ENCODE measurements at regions of chr17 and their contacts with region 1.

Region 1: DNA sequence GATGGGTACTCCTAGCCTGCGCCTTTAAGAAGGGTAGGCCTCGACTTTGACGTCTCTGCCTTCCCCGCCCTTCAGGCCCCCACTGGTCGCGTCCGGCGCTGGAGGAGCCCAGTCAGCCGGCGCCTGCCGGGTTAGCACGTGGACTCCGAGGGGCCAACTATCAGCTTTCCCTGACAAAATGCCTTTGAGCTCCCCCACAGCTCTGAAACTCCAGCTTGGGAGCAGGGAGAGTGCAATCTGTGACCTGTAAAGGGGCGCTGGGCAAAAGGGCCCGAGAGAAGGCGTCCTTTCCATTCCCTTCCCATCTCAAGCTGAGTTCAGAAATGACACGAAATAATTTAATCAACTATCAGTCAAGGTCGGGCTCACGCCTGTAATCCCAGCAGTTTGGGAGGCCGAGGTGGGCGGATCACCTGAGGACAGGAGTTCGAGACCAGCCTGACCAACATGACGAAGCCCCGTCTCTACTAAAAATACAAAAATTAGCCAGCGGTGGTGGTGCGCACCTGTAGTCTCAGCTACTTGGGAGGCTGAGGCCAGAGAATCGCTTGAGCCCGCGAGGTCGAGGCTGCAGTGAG is 2.3 kb upstream of the SLC25A39 start:
- DNase-seq: peak; percentile 84 to 96 (median 93)
- ATAC-seq: peak; percentile 75 to 82 (median 76)
- H3K4me3 ChIP-seq: peak overlapping the region; percentile 41 to 87
- H3K4me3 Mint-ChIP-seq: peak overlapping the region; percentile 64 to 94 (median 65)
- H3K27ac ChIP-seq: peak overlapping the region; percentile 28
- H3K27ac Mint-ChIP-seq: peak overlapping the region; percentile 85 to 88
- H3K4me1 ChIP-seq: peaks cover 4 to 49% of the 10 kb centered on the region in 2 experiments
- H3K4me1 Mint-ChIP-seq: peaks cover 11 to 40% (median 36%) of the 10 kb centered on the region in 3 donors
- H3K27me3 ChIP-seq: no peaks in the 10 kb centered on the region
- H3K27me3 Mint-ChIP-seq: no peaks in the 10 kb centered on the region

Region 2: DNA sequence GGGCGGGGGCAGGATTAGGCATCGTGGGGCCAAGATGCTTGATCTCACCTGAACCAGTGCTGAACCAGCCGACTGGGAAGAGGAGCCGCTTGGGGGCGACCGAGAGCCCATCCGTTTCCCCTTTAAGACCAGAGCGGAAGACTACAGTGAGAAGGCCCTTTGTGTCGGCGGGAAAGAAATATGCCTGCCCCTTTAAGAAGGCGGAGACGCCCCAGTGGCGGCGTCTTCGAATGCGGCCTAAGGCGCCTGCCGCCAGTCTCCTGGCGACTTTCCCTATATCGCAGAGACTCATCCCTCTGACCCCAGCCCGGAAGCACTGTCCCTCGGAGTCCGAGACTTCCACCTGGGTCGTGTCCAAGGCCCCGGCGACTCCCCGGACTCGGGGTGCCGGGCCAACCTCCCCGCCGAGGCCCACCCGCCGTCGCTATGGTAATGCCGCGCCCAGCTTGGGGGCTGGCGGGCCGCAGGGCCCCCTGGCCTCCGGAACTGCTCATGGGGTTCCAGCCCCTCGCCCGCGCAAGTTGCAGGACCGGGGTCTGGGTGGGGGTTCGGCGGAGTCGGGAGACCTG is 185.2 kb before region 1 on chr17 and contains the start of gene HROB:
- CTCF ChIA-PET with region 1: no interaction called
- POLR2A ChIA-PET with region 1: interaction called in 1 of 2 experiments, 10 read pairs
- DNase-seq: peak; percentile 91 to 99 (median 97)
- ATAC-seq: peak; percentile 95 to 98 (median 97)
- H3K4me3 ChIP-seq: peak within 1 kb of the TSS; percentile 58 to 77
- H3K4me3 Mint-ChIP-seq: peak within 1 kb of the TSS; percentile 76 to 83 (median 79)
- H3K27ac ChIP-seq: peak within 1 kb of the TSS; percentile 73
- H3K27ac Mint-ChIP-seq: peak within 1 kb of the TSS; percentile 59 to 64
- H3K4me1 ChIP-seq: peaks cover 4 to 15% of the 10 kb centered on the region in 2 experiments
- H3K4me1 Mint-ChIP-seq: peaks cover 0 to 20% (median 12%) of the 10 kb centered on the region in 3 donors
- H3K27me3 ChIP-seq: peaks cover 0 to 19% of the 10 kb centered on the region in 2 experiments
- H3K27me3 Mint-ChIP-seq: peaks cover 5 to 20% of the 10 kb centered on the region in 2 donors
- total RNA-seq, gene HROB: 0.73 to 3.4 (median 1.1) TPM

Region 3: DNA sequence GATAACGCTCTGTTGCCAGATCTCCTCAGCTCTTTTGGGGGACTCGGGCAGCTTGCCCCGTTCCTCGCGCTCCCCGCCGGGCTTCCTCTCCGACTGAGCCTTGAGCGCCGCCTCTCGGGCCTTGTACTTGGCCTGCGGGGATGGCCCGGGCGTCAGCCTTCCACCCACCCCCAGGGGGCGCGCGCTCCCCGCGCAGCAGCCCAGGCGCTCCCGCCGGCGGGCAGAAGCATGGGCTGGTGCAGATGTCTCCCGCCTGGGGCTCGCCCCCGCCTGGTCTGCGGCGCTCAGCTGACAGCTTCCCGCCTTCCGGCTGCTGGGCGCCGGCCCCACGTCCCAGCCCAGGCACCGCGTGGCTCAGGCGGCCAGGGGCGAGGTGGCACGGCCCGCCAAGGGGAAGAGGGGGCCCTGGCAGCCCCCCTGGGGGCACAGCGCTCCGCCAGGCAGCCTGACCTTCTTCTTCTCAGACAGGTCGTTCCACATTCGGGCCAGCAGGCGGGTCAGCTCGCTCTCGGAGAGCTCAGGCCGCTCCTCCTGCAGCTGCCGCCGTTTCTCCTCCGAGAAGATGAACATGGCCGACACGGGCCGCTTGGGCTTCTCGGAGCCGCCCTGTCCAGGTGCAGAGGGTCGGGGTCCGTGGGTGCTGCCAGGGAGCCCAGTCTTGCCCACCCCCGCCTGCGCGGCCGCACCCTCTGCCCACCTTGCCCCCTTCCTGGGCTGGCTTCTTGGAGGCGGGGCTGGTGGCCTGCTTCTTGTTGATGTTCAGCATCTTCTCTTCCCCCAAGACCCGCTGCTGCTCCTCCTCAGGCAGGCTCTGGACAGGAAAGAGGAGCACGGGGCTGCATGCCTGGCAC is 116.4 kb before region 1 on chr17:
- CTCF ChIA-PET with region 1: interaction called, 8 to 13 read pairs
- POLR2A ChIA-PET with region 1: no interaction called
- DNase-seq: peak; percentile 81 to 95 (median 89)
- ATAC-seq: peak; percentile 95 to 96 (median 96)
- H3K4me3 ChIP-seq: no peak overlapping the region
- H3K4me3 Mint-ChIP-seq: peak overlapping the region; percentile 34 to 62 (median 50)
- H3K27ac ChIP-seq: peak overlapping the region; percentile 62
- H3K27ac Mint-ChIP-seq: peak overlapping the region; percentile 70 to 83
- H3K4me1 ChIP-seq: peaks cover 17 to 73% of the 10 kb centered on the region in 2 experiments
- H3K4me1 Mint-ChIP-seq: peaks cover 54 to 68% (median 63%) of the 10 kb centered on the region in 3 donors
- H3K27me3 ChIP-seq: no peaks in the 10 kb centered on the region
- H3K27me3 Mint-ChIP-seq: no peaks in the 10 kb centered on the region

Region 4: DNA sequence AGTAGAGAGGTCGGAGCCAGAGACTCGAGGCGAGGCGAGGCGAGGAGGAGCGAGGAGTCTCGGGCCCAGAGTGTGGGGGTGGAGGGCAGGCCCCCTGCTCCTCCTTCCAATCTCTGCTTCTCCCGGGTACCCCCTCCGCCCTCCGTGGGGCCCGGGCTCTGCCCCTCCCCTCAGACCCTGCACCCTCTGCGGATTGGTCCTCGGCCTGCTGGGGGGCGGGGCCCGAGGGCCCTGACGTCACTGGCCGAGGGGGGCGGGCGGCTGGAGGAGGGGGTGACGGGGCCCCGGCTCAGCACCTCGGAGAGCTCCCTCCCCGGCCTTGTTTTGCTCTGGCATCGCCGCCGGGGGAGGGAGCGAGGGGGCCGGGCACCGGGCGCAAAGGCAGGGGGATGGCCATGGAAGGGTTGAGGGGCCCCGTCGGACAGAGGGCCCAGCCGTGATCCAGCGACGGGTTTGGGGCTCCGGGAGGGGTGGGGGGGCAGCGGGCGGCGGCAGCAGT is 18.6 kb before region 1 on chr17 and contains the start of gene RUNDC3A:
- CTCF ChIA-PET with region 1: interaction called, 7 to 11 read pairs
- POLR2A ChIA-PET with region 1: no interaction called
- DNase-seq: peak; percentile 65 to 91 (median 82)
- ATAC-seq: peak; percentile 91 to 93 (median 92)
- H3K4me3 ChIP-seq: peak within 1 kb of the TSS; percentile 40 to 51
- H3K4me3 Mint-ChIP-seq: peak within 1 kb of the TSS; percentile 42 to 57 (median 51)
- H3K27ac ChIP-seq: no peak within 1 kb of the TSS
- H3K27ac Mint-ChIP-seq: no peak within 1 kb of the TSS
- H3K4me1 ChIP-seq: peaks cover 10 to 29% of the 10 kb centered on the region in 2 experiments
- H3K4me1 Mint-ChIP-seq: peaks cover 14 to 24% (median 15%) of the 10 kb centered on the region in 3 donors
- H3K27me3 ChIP-seq: peaks cover 8 to 67% of the 10 kb centered on the region in 2 experiments
- H3K27me3 Mint-ChIP-seq: peaks cover 19 to 42% of the 10 kb centered on the region in 2 donors
- total RNA-seq, gene RUNDC3A: 0.38 to 0.65 (median 0.41) TPM in 3 of 5 donors, not detected in the others